Activated B cell treated with CpG ODN at 0.5 μM for 24 hours (primary cell): ENCODE measurements at regions of chrX and their contacts with region 1.

Region 1: DNA sequence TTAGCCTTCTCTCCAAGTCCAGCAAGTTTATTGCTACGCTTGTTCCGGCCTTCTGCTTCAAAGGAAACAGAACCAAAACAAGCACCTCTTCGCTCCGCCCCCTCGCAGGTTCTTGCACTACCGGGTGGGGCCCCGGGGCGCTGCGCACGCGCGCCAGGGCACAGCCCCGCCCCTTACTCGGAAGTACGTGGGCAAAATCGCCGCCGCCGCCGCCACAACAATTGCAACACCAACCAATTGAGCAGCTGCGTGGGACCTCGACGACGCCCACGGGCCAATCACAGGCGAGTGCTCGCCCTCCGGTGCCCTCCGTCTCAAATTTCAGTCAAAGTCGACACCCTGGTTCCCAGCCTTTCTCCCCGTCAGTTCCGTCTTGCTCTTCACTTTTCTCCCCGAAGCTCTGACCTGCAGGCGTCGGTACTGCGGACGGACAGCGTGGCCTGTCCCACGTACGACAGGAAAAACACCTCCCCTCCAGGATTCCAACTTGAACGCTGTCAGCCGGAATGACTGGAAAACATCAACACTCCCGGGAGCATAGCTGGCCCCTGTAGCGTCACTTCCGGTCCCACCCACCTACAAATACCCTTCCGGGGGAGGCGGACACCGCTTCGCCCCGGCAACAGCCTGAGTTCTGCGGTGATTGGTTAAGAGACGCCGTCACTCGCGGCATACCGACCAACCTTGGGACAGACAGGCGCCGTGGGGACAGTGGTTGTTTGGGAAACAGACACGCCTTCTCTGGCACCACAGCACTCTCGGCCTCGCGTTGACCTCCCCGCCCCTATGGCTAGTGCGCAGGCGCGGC is 624 bp upstream of the OTUD5 start:
- DNase-seq: peak; percentile 81
- ATAC-seq: peak; percentile 84
- H3K4me3 Mint-ChIP-seq: peak overlapping the region; percentile 98
- H3K27ac Mint-ChIP-seq: peak overlapping the region; percentile 100
- H3K4me1 Mint-ChIP-seq: peaks cover 69% of the 10 kb centered on the region
- H3K27me3 Mint-ChIP-seq: no peaks in the 10 kb centered on the region
- CTCF ChIP-seq: no peak

Region 2: DNA sequence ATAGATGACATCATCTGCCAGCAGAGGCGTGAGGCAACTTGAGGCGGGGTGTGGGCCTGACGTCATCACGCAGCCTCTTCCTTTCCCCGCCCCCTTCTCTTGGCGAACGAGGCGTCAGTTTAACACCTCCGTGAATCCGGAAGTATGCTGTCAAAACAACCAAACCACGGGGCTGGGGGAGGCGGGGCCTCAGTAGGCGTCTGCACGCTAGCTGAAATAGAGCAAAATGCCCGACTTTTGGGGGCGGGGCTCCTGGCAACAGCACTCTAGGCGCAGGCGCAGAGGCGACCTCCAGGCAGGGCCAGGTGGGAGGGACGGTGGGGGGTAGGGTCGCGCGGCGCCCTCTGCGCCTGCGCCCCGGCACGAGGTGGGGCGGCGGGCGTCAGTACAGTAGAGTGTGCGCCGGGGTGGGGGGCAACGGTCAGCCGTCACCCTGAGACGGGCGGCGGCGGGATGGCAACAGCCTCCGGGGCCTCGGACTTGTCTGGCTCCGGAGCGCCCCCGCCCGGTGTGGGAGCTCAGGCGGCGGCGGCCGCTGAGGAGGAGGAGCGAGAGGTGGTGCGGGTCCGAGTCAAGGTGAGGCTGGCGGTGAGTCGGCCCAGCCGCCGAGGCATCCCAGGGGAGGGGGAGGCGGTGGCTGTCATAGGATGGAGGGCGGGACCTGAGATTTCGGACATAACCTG is 418.5 kb before region 1 on chrX and contains the start of gene TBC1D25:
- CTCF ChIA-PET with region 1: no interaction called
- POLR2A ChIA-PET with region 1: interaction called, 3 read pairs
- intact Hi-C with region 1: loop called (anchors 1 kb)
- DNase-seq: peak; percentile 84
- ATAC-seq: peak; percentile 78
- H3K4me3 Mint-ChIP-seq: peak within 1 kb of the TSS; percentile 92
- H3K27ac Mint-ChIP-seq: peak within 1 kb of the TSS; percentile 95
- H3K4me1 Mint-ChIP-seq: peaks cover 20% of the 10 kb centered on the region
- H3K27me3 Mint-ChIP-seq: no peaks in the 10 kb centered on the region
- CTCF ChIP-seq: no peak
- total RNA-seq, gene TBC1D25: 16.4 and 19.4 TPM in 2 replicates

Region 3: DNA sequence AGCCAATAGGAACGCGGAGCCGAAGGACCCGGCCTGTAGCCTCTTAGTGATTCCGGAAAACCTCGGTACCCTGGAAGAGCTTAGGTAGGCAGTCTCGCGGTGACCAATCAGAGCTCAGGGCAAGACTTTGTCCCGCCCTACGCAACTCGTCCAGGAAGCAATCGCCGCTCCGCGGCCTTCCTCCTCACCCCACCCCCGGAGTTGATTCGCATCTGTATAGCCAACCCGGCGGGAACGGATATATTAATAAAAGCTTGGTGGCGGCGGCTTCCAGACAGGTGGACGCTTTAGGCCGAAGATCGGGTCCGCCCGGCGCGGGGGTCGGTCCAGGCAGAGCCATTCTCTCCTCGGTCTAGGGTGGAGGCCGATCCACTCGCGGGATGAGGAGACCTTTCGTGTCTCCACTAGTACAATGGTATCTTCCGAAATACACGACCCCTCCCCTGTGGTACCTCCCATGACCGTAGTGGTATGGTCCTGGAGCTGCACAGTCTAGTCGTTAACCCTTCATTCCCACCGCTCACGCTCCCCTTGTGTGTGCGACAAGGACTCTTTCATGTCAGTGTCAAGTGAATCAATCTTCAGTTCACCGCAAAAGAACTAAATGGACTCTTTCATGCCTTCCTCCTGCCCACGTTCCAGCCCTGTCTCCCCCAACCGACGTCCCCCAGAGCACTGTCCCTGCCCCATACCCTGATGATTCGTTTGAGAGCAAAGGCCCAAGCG is 220.7 kb before region 1 on chrX:
- CTCF ChIA-PET with region 1: no interaction called
- POLR2A ChIA-PET with region 1: interaction called, 10 read pairs
- intact Hi-C with region 1: no loop called
- DNase-seq: peak; percentile 65
- ATAC-seq: peak; percentile 97
- H3K4me3 Mint-ChIP-seq: peak overlapping the region; percentile 91
- H3K27ac Mint-ChIP-seq: peak overlapping the region; percentile 94
- H3K4me1 Mint-ChIP-seq: peaks cover 15% of the 10 kb centered on the region
- H3K27me3 Mint-ChIP-seq: no peaks in the 10 kb centered on the region
- CTCF ChIP-seq: no peak

Region 4: GRCh38 chrX:48897621-48898306 is 60.3 kb before region 1 on chrX and contains the starts of genes PQBP1 and TIMM17B:
- CTCF ChIA-PET with region 1: no interaction called
- POLR2A ChIA-PET with region 1: interaction called, 25 read pairs
- intact Hi-C with region 1: loop called (anchors 1 kb)
- DNase-seq: peak; percentile 73
- ATAC-seq: peak; percentile 86
- H3K4me3 Mint-ChIP-seq: peak within 1 kb of the TSS; percentile 94
- H3K27ac Mint-ChIP-seq: peak within 1 kb of the TSS; percentile 97
- H3K4me1 Mint-ChIP-seq: peaks cover 29% of the 10 kb centered on the region
- H3K27me3 Mint-ChIP-seq: no peaks in the 10 kb centered on the region
- CTCF ChIP-seq: no peak
- total RNA-seq, gene PQBP1: 81.6 and 91.5 TPM in 2 replicates
- total RNA-seq, gene TIMM17B: 47.8 and 52.6 TPM in 2 replicates

Region 5: GRCh38 chrX:48937054-48937907 is 20.8 kb before region 1 on chrX:
- CTCF ChIA-PET with region 1: interaction called, 4 read pairs
- POLR2A ChIA-PET with region 1: interaction called, 99 read pairs
- intact Hi-C with region 1: loop called (anchors 1 kb)
- DNase-seq: peak; percentile 68
- ATAC-seq: peak; percentile 54
- H3K4me3 Mint-ChIP-seq: peak overlapping the region; percentile 77
- H3K27ac Mint-ChIP-seq: peak overlapping the region; percentile 98
- H3K4me1 Mint-ChIP-seq: peaks cover 87% of the 10 kb centered on the region
- H3K27me3 Mint-ChIP-seq: no peaks in the 10 kb centered on the region
- CTCF ChIP-seq: no peak

Region 6: DNA sequence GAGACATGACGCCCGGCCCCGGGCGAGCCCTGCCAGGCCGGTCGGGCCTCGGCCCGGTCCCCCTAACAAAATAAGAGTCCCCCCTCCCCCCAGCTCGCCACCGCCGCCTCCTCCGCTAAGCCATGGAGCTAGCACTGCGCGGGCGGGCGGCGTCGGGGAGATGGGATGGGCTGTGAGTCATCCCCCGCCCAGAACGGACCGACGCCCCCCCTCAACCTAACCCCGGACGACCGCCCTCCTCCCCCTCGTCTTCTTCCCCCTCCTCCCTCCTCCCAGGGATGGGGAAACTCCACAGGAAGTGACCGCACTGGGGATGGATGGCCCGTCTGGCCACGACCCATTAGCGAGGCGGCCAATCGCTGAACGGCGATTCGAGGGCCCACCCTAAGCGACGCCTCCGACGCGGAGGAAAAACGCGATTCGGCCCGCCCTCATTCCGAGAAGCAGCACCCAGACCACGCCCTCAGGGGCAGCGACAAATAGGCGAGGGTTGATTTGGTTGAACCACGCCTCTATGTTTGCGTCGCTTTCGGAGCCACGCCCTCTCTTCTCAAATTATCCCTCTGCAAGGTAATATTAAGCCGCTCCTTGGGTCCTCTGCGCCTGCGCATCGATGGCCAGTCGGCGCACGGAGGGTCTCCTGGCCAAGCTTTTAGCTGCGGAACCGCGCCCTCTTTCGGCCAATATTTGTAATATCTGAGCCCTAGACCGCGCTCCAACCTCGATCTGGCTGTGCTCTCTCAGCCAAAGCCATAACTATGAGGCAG is 85.4 kb after region 1 on chrX and contains the start of gene TFE3:
- CTCF ChIA-PET with region 1: no interaction called
- POLR2A ChIA-PET with region 1: interaction called, 16 read pairs
- intact Hi-C with region 1: loop called (anchors 1 kb)
- DNase-seq: peak; percentile 82
- ATAC-seq: peak; percentile 86
- H3K4me3 Mint-ChIP-seq: peak within 1 kb of the TSS; percentile 89
- H3K27ac Mint-ChIP-seq: peak within 1 kb of the TSS; percentile 85
- H3K4me1 Mint-ChIP-seq: peaks cover 33% of the 10 kb centered on the region
- H3K27me3 Mint-ChIP-seq: no peaks in the 10 kb centered on the region
- CTCF ChIP-seq: no peak
- total RNA-seq, gene TFE3: 31.1 and 33.3 TPM in 2 replicates

Region 7: DNA sequence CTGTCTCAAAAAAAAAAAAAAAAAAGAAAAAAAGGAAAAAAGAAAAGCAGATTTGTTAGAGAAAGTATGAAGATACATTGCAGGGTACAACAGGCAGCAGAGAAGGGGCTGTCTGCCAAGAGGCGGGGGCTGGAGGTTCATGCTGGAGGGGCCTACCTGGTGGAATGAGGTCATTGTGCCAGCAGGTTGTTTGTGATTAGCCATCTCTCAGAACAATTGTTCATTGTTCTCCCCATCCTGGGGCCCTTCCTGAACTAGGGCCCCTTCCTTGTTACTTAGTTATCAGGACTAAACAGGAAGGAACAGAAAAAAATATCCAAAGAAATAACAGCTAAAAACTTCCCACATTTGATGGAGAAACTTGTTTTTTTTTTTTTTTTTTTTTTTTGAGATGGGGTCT is 179.5 kb after region 1 on chrX:
- CTCF ChIA-PET with region 1: no interaction called
- POLR2A ChIA-PET with region 1: no interaction called
- intact Hi-C with region 1: no loop called
- DNase-seq: no peak
- ATAC-seq: no peak
- H3K4me3 Mint-ChIP-seq: no peak overlapping the region
- H3K27ac Mint-ChIP-seq: no peak overlapping the region
- H3K4me1 Mint-ChIP-seq: no peaks in the 10 kb centered on the region
- H3K27me3 Mint-ChIP-seq: no peaks in the 10 kb centered on the region
- CTCF ChIP-seq: no peak